ENCODE measurements at regions of chr19 and their contacts with region 1.

Region 1: GRCh38 chr19:50329146-50329925 is at the start of gene KCNC3:
- DNase-seq: peak; percentile 100
- H3K4me3 ChIP-seq: peak within 1 kb of the TSS; percentile 74
- H3K27ac ChIP-seq: peak within 1 kb of the TSS; percentile 79
- H3K4me1 ChIP-seq: peaks cover 59% of the 10 kb centered on the region
- CTCF ChIP-seq: no peak
- total RNA-seq, gene KCNC3: 7.1 and 7.4 TPM in 2 replicates

Region 2: GRCh38 chr19:50252111-50252886 is 77.0 kb before region 1 on chr19:
- CTCF ChIA-PET with region 1: no interaction called
- POLR2A ChIA-PET with region 1: no interaction called
- intact Hi-C with region 1: loop called (anchors 2 kb)
- DNase-seq: peak; percentile 41
- H3K4me3 ChIP-seq: no peak overlapping the region
- H3K27ac ChIP-seq: no peak overlapping the region
- H3K4me1 ChIP-seq: no peaks in the 10 kb centered on the region
- CTCF ChIP-seq: peak; percentile 85

Region 3: GRCh38 chr19:50341091-50341564 is 11.8 kb after region 1 on chr19:
- CTCF ChIA-PET with region 1: interaction called, 15 read pairs
- POLR2A ChIA-PET with region 1: interaction called, 7 read pairs
- intact Hi-C with region 1: loop called (anchors 2 kb)
- DNase-seq: peak; percentile 76
- H3K4me3 ChIP-seq: peak overlapping the region; percentile 74
- H3K27ac ChIP-seq: peak overlapping the region; percentile 98
- H3K4me1 ChIP-seq: peaks cover 75% of the 10 kb centered on the region
- CTCF ChIP-seq: no peak

Region 4: DNA sequence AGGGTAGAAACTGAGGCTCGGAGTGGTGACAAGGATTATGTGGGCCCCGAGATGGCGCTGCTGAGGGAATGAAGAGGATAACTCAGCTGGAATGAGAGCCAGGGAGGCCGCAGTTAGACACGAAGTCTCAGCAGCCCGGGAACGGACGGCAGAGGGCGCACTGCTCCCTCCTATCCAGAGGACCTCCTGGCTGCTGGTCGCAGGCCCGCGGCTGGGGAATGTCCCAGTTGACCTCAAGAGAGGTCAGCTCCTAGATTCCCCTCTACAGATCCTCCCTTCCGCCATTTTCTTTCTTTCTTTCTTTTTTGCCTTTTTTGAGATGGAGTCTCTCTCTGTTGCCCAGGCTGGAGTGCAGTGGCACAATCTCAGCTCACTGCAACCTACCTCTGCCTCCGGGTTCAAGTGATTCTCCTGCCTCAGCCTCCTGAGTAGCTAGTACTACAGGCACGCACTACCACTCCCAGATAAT is 208.5 kb after region 1 on chr19:
- CTCF ChIA-PET with region 1: no interaction called
- POLR2A ChIA-PET with region 1: interaction called, 12 read pairs
- intact Hi-C with region 1: no loop called
- DNase-seq: peak; percentile 76
- H3K4me3 ChIP-seq: no peak overlapping the region
- H3K27ac ChIP-seq: no peak overlapping the region
- H3K4me1 ChIP-seq: no peaks in the 10 kb centered on the region
- CTCF ChIP-seq: peak; percentile 92

Region 5: GRCh38 chr19:51607920-51608562 is 1278.7 kb after region 1 on chr19:
- CTCF ChIA-PET with region 1: no interaction called
- POLR2A ChIA-PET with region 1: no interaction called
- intact Hi-C with region 1: loop called (anchors 10 kb)
- DNase-seq: peak; percentile 81
- H3K4me3 ChIP-seq: peak overlapping the region; percentile 47
- H3K27ac ChIP-seq: peak overlapping the region; percentile 94
- H3K4me1 ChIP-seq: peaks cover 36% of the 10 kb centered on the region
- CTCF ChIP-seq: peak; percentile 92

Measured in OCI-LY7 (cell line).